ENCODE measurements at regions of chr16 and their contacts with region 1.

Region 1: GRCh38 chr16:57639172-57639887 is 10.9 kb downstream of the ADGRG1 start:
- DNase-seq: no peak
- ATAC-seq: no peak
- H3K4me3 ChIP-seq: no peak overlapping the region
- H3K27ac ChIP-seq: no peak overlapping the region
- H3K4me1 ChIP-seq: peaks cover 13 to 25% of the 10 kb centered on the region in 2 experiments; a peak in 3 of 4 replicates
- H3K27me3 ChIP-seq: no peaks in the 10 kb centered on the region
- CTCF ChIP-seq: no peak
- POLR2A ChIP-seq: no peak
- RAD21 ChIP-seq: no peak

Region 2: GRCh38 chr16:57619832-57620636 is 19.3 kb before region 1 on chr16:
- CTCF ChIA-PET with region 1: no interaction called
- POLR2A ChIA-PET with region 1: interaction called, 4 read pairs
- RAD21 ChIA-PET with region 1: no interaction called
- intact Hi-C with region 1: loop called (anchors 2 kb)
- DNase-seq: no peak
- ATAC-seq: peak; percentile 86
- H3K4me3 ChIP-seq: peak overlapping the region; percentile 75 to 82
- H3K27ac ChIP-seq: peak overlapping the region; percentile 90
- H3K4me1 ChIP-seq: peaks cover 53 to 60% of the 10 kb centered on the region in 2 experiments
- H3K27me3 ChIP-seq: no peaks in the 10 kb centered on the region
- CTCF ChIP-seq: no peak
- POLR2A ChIP-seq: no peak
- RAD21 ChIP-seq: no peak

Measured in HCT116 (cell line).